ENCODE measurements at regions of chr20 and their contacts with region 1.

Region 1: GRCh38 chr20:46349035-46349741 is 40.9 kb upstream of the CDH22 start:
- DNase-seq: peak; percentile 90
- H3K4me3 ChIP-seq: peak overlapping the region in 1 of 2 experiments; percentile 28; a peak in 1 of 4 replicates
- H3K27ac ChIP-seq: 0 out of 4 replicates have a peak overlapping the region, but pooled peaks of 1 of the 2 experiments have one; percentile 81
- H3K4me1 ChIP-seq: peaks cover 16 to 51% of the 10 kb centered on the region in 2 experiments; a peak in 3 of 4 replicates
- H3K27me3 ChIP-seq: no peaks in the 10 kb centered on the region
- CTCF ChIP-seq: peak; percentile 82
- EP300 ChIP-seq: no peak
- RAD21 ChIP-seq: peak; percentile 93

Region 2: GRCh38 chr20:46126440-46127056 is 222.6 kb before region 1 on chr20:
- CTCF ChIA-PET with region 1: interaction called, 219 read pairs
- POLR2A ChIA-PET with region 1: interaction called, 3 read pairs
- DNase-seq: no peak
- H3K4me3 ChIP-seq: no peak overlapping the region
- H3K27ac ChIP-seq: no peak overlapping the region
- H3K4me1 ChIP-seq: peaks cover 9% of the 10 kb centered on the region in 2 experiments; a peak in 2 of 4 replicates
- H3K27me3 ChIP-seq: peaks cover 30% of the 10 kb centered on the region; the same call in 1 of the 2 replicates
- CTCF ChIP-seq: no peak
- EP300 ChIP-seq: no peak
- RAD21 ChIP-seq: no peak

Region 3: GRCh38 chr20:46169245-46170171 is 179.7 kb before region 1 on chr20:
- CTCF ChIA-PET with region 1: interaction called, 33 read pairs
- POLR2A ChIA-PET with region 1: no interaction called
- DNase-seq: peak; percentile 62
- H3K4me3 ChIP-seq: no peak overlapping the region
- H3K27ac ChIP-seq: peak overlapping the region in 1 of 2 experiments; percentile 82; a peak in 2 of 4 replicates
- H3K4me1 ChIP-seq: peaks cover 0 to 28% of the 10 kb centered on the region in 2 experiments; a peak in 2 of 4 replicates
- H3K27me3 ChIP-seq: peaks cover 21% of the 10 kb centered on the region; the same call in 1 of the 2 replicates
- CTCF ChIP-seq: no peak
- EP300 ChIP-seq: peak in 1 of 2 experiments; percentile 67; a peak in 1 of 4 replicates
- RAD21 ChIP-seq: no peak

Region 4: DNA sequence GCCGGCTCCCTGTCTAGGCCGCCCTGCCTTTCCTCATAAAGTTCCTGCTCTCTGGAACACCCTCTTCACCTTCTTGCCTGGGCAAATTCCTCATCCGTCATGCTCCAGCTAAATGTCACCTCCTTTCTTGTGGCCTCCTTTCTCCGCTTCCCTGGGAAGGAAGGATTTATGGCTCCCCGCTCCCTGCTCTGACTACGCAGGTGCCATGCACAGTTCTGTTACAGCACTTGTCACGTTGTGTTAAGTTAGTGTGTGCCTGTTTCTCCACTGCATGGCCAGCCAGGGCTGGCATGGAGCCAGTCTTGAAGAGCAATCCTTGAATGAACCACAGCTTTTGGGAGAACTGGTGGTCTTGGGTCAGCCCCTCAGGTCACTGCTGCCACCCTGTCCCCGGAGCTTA is 169.3 kb before region 1 on chr20:
- CTCF ChIA-PET with region 1: interaction called, 33 read pairs
- POLR2A ChIA-PET with region 1: no interaction called
- DNase-seq: no peak
- H3K4me3 ChIP-seq: no peak overlapping the region
- H3K27ac ChIP-seq: no peak overlapping the region
- H3K4me1 ChIP-seq: peaks cover 0 to 14% of the 10 kb centered on the region in 2 experiments; a peak in 1 of 4 replicates
- H3K27me3 ChIP-seq: no peaks in the 10 kb centered on the region; the same call in 1 of the 2 replicates
- CTCF ChIP-seq: no peak
- EP300 ChIP-seq: no peak
- RAD21 ChIP-seq: no peak

Region 5: DNA sequence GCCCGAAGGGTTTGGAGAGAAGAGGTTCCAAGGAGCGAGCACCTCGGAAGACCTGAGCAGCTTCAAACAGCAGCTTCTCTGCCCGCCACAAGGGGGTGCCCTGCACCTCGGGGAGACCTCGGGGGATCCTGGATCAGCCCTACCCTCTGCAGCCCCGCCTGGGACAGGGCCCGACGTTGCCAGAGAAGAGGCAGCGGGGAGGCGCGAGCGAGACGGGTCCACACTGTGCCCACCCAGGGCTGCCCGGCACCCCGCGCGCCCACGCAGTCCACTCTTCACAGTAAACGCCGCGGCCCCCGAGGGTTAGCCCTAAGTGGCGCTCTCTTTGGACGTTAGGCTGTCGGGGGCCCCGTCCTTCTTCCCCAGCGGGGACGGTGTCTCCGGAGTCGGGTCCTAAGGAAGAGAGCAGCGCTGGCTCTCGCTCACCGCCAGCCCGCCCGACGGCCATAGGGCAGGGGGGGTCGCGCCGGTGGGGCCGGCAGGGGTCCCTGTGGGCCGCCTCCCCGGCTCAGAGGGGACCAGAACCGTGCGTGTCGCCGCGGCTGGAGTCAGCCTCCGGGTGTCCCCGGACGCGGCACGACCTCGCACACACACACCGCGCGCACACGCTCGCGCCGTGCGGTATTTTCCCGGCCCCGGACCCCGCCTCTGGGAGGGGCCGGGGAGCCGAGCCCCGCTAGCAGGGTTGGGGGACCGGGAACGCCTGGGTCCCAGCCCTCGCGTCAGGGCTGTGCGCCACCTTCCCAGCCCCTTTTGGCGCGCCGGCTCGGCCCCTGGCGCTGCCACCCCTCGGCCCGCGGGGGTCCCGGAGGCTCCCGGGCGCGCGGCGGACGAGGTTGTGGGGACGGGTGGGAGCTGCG is 41.8 kb before region 1 on chr20:
- CTCF ChIA-PET with region 1: interaction called, 190 read pairs
- POLR2A ChIA-PET with region 1: interaction called, 4 read pairs
- DNase-seq: peak; percentile 89
- H3K4me3 ChIP-seq: peak overlapping the region in 1 of 2 experiments; percentile 49; a peak in 3 of 4 replicates
- H3K27ac ChIP-seq: no peak overlapping the region
- H3K4me1 ChIP-seq: no peaks in the 10 kb centered on the region; a peak in 1 of 4 replicates
- H3K27me3 ChIP-seq: peaks cover 61% of the 10 kb centered on the region
- CTCF ChIP-seq: peak; percentile 69
- EP300 ChIP-seq: no peak
- RAD21 ChIP-seq: peak; percentile 75

Region 6: DNA sequence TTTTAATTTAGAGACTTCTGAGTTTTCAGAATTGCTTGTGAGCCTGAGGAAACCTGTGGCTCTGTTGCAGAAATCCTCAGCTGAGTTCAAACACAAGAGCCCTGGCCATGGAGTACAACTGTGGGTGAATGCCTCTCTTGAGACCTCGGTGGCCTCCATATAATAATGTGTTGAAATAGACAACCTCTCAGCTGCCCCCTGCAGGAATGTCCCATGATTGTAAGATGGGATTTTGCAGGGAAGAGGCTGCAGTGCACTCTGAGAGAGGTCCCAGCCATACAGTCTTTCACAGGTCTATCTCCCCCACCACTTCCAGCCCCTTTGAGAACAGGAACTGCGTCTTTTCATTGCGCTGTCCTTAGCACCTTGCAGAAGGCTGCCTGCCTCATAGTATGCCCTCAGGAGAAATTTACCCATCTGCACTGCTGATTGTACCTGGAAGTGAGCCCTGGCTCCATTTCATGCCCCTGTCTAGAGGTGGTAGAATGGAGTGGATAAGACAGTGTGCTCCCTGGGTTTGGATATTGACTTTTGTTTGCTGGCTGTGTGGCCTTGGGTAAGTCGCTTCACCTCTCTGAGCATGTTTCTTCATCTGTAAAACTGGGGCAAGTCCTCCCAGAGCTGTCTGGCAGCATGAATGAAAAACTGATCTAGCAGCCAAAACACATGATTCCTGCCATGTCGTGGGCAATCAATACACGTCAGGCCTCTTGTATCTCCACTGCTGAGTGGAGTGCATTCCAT is 24.1 kb before region 1 on chr20:
- CTCF ChIA-PET with region 1: interaction called, 54 read pairs
- POLR2A ChIA-PET with region 1: interaction called, 3 read pairs
- DNase-seq: peak; percentile 71
- H3K4me3 ChIP-seq: no peak overlapping the region
- H3K27ac ChIP-seq: no peak overlapping the region
- H3K4me1 ChIP-seq: peaks cover 0 to 20% of the 10 kb centered on the region in 2 experiments; a peak in 1 of 4 replicates
- H3K27me3 ChIP-seq: no peaks in the 10 kb centered on the region
- CTCF ChIP-seq: peak; percentile 52
- EP300 ChIP-seq: no peak
- RAD21 ChIP-seq: peak; percentile 60

Region 7: GRCh38 chr20:46363800-46364634 is 14.8 kb after region 1 on chr20:
- CTCF ChIA-PET with region 1: interaction called, 33 read pairs
- POLR2A ChIA-PET with region 1: interaction called, 5 read pairs
- DNase-seq: peak; percentile 97
- H3K4me3 ChIP-seq: peak overlapping the region; percentile 77 to 84
- H3K27ac ChIP-seq: peak overlapping the region; percentile 92 to 96
- H3K4me1 ChIP-seq: peaks cover 0 to 33% of the 10 kb centered on the region in 2 experiments; a peak in 2 of 4 replicates
- H3K27me3 ChIP-seq: no peaks in the 10 kb centered on the region
- CTCF ChIP-seq: no peak
- EP300 ChIP-seq: no peak
- RAD21 ChIP-seq: no peak